Endothelial cell of umbilical vein (primary cell): ENCODE measurements at regions of chr5 and their contacts with region 1.

Region 1: DNA sequence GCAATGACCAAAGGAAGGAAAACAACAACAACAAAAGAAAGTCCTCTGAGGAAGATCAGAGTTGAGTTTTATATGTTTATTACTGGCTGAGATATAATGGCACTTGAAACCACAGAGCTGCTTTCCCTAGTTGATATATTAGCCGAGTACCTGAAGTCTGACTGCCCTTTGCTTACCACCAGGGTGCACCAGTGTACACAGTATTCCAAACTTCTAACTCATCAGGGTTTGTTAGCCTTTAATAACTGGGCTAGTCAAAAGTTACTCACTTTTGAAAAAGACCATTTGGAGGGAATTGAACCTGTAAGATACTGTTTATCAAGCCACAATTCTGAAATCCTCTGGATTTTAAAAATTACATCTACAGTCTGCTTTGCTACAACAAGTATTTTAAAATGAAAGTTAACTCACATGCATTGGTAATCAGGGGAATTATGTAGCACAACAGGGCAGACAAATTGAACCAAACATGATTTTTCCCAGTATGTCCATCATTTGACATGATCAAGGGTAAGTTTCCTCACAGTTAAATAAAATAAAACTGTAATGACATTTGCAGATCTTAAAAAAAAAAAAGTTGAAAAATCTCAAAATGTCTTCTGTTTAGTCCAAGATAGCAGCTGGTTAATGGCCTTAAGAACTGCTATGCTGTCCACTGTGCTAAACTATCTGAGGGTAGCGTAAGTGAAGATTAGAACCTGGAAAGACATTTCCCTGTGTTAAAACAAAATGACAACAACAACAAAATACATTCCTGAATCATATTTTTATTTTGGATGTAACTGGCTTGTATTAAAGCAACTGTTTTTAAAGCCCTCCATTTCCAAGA is 57.3 kb upstream of the C6 start:
- DNase-seq: peak; percentile 43
- H3K4me3 ChIP-seq: no peak overlapping the region
- H3K27ac ChIP-seq: no peak overlapping the region
- H3K4me1 ChIP-seq: no peaks in the 10 kb centered on the region
- H3K27me3 ChIP-seq: no peaks in the 10 kb centered on the region
- CTCF ChIP-seq: peak; percentile 35 to 57
- POLR2A ChIP-seq: no peak

Region 2: DNA sequence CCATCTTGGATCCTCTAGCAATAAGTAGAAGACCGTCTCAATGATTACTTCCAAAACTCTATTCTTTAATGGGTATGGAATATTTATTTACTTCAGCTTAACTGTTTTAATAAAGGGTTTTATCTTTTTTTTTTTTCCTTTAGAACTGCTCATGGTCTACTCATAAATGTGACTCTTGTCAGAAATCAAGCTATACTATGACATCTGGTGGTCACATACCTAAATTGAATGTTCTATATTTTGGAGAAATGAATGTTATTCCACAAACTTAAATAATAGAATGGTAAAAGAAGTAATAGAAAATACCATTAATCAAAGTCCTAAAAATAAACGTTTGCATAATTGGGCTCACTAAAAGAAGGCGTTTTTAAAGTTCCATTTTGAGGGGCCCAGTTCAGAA is 371.0 kb after region 1 on chr5:
- CTCF ChIA-PET with region 1: interaction called, 24 read pairs
- POLR2A ChIA-PET with region 1: no interaction called
- dilution Hi-C with region 1: no loop called
- intact Hi-C with region 1: no loop called
- DNase-seq: no peak
- H3K4me3 ChIP-seq: no peak overlapping the region
- H3K27ac ChIP-seq: no peak overlapping the region
- H3K4me1 ChIP-seq: no peaks in the 10 kb centered on the region
- H3K27me3 ChIP-seq: no peaks in the 10 kb centered on the region
- CTCF ChIP-seq: no peak
- POLR2A ChIP-seq: no peak